Activated naive CD4-positive, alpha-beta T cell treated with anti-CD3 and anti-CD28 coated beads for 36 hours (primary cell): ENCODE measurements at regions of chr6 and their contacts with region 1.

Region 1: DNA sequence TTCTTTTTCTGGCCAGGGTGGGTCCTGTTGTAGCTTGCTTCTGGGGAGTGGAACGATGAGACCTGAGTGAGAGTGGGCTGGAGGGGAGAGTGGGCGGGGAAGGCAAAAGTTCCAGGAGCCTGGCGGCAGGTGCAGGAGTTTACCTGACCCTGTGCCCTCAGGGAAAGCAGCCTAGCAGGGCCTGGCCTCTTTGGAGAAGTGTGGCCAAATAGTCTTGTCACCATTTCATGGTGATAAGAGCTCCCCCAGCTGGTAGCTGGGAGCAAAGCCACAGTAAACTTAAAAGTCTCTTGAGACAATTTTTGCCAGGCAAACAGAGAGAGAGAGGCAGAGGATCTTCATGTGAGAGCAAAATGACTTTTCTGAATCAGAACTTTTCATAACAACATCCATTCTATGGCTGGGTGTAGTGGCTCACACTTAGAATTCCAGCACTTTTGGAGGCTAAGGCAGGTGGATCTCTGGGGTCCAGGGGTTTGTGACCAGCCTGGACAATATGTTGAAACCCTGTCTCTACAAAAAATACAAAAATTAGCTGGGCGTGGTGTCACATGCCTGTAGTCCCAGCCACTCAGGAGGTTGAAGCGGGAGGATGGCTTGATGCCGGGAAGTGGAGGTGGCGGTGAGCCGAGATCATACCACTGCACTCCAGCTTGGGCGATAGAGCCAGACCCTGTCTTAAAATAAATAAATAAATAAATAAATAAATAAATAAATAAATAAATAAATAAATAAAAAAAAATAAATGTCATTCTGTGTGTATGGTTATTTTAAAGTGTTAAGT is 161.8 kb upstream of the SCGN start:
- DNase-seq: peak; percentile 82
- H3K4me3 Mint-ChIP-seq: no peak overlapping the region
- H3K27ac Mint-ChIP-seq: no peak overlapping the region
- H3K4me1 Mint-ChIP-seq: peaks cover 6% of the 10 kb centered on the region
- H3K27me3 Mint-ChIP-seq: no peaks in the 10 kb centered on the region

Region 2: DNA sequence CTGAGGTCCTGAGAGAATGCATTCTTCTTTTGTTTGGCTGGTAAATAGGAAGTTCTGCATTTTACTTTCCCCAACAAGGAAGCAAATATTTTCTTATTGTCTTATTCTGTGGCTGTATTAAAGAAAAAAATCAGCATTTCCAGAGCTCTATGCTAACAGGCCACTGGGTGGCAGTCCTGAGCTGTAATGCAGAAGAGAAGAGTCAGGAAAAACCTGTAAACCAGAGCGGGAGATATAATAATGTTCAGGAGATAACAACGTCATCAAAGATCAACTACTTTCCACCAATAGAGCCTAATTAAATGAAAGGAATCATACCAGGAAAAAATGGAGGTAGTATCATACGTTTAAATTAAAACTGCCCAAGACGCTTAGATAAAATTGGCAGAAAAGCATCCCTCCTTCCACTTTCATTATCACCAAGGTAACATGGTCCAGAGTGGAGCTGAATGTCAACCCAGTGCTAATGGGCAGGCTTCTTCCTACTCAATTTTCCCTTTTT is 266.7 kb before region 1 on chr6:
- CTCF ChIA-PET with region 1: interaction called, 32 read pairs
- intact Hi-C with region 1: loop called (anchors 1 kb)
- DNase-seq: peak; percentile 80
- H3K4me3 Mint-ChIP-seq: peak overlapping the region; percentile 47
- H3K27ac Mint-ChIP-seq: no peak overlapping the region
- H3K4me1 Mint-ChIP-seq: peaks cover 8% of the 10 kb centered on the region
- H3K27me3 Mint-ChIP-seq: peaks cover 2% of the 10 kb centered on the region

Region 3: DNA sequence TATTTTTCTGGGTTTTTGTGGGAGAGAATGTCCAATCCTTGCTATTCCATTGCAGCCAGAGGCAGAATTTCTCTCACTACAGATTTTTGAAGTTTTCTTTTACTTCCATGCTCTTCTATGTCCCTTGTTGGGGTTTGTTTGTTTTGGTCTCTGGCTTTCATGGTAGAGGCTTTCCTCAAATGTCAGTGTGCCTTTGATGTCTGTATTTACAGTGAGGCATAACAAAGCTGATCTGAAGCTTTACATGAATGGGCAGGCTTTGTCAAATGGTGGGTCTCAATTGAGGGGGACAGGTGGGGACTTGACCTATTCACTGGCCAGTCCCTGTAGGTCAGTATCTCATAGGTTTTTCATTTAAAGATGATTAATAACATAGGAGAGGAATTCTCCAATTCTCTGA is 219.7 kb before region 1 on chr6:
- CTCF ChIA-PET with region 1: interaction called, 107 read pairs
- intact Hi-C with region 1: loop called (anchors 1 kb)
- DNase-seq: no peak
- H3K4me3 Mint-ChIP-seq: no peak overlapping the region
- H3K27ac Mint-ChIP-seq: no peak overlapping the region
- H3K4me1 Mint-ChIP-seq: peaks cover under 1% of the 10 kb centered on the region
- H3K27me3 Mint-ChIP-seq: no peaks in the 10 kb centered on the region

Region 4: DNA sequence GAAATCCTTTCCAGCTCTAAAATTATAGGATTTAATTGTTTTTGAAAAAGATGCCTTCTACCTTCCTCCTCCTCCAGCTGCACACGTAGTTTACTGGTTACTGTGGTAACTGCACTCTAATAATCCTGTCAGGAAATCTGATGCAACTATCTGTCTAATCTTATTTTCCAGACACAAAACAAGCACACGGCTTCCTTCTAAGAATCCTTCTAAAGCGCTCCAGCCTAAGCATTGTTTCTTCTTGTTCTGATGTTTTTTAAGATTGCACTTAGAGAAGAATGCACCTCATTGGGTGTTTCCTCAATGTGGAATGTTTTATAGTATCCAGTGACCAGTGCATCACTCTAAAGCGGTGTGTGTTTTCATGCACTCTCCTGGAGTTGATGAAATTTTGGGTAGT is 147.4 kb before region 1 on chr6:
- CTCF ChIA-PET with region 1: interaction called, 6 read pairs
- intact Hi-C with region 1: loop called (anchors 1 kb)
- DNase-seq: no peak
- H3K4me3 Mint-ChIP-seq: no peak overlapping the region
- H3K27ac Mint-ChIP-seq: no peak overlapping the region
- H3K4me1 Mint-ChIP-seq: peaks cover 12% of the 10 kb centered on the region
- H3K27me3 Mint-ChIP-seq: no peaks in the 10 kb centered on the region

Region 5: DNA sequence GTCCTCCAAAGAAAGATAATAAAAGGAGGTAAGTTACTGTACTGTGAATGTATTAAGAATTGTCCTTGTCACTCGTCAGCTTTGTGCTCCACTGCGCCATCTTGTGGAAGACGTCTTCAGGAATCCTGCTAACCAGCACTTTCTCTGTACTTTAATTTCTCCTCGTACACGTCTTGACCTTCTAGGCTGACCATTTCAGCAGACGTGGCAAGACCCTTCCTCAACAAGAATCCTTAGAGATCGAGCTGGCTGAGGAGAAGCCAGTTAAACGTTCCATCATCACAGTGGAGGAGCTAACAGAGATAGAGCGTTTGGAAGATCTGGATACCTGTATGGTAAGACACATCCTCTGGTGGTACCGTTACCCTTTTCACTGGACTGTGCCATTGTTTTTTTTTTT is 66.3 kb after region 1 on chr6:
- CTCF ChIA-PET with region 1: interaction called, 11 read pairs
- intact Hi-C with region 1: loop called (anchors 5 kb)
- DNase-seq: peak; percentile 92
- H3K4me3 Mint-ChIP-seq: no peak overlapping the region
- H3K27ac Mint-ChIP-seq: no peak overlapping the region
- H3K4me1 Mint-ChIP-seq: no peaks in the 10 kb centered on the region
- H3K27me3 Mint-ChIP-seq: no peaks in the 10 kb centered on the region

Region 6: GRCh38 chr6:25583099-25583498 is 92.9 kb after region 1 on chr6:
- CTCF ChIA-PET with region 1: no interaction called
- intact Hi-C with region 1: no loop called
- DNase-seq: peak; percentile 10
- H3K4me3 Mint-ChIP-seq: no peak overlapping the region
- H3K27ac Mint-ChIP-seq: no peak overlapping the region
- H3K4me1 Mint-ChIP-seq: peaks cover 10% of the 10 kb centered on the region
- H3K27me3 Mint-ChIP-seq: no peaks in the 10 kb centered on the region

Region 7: DNA sequence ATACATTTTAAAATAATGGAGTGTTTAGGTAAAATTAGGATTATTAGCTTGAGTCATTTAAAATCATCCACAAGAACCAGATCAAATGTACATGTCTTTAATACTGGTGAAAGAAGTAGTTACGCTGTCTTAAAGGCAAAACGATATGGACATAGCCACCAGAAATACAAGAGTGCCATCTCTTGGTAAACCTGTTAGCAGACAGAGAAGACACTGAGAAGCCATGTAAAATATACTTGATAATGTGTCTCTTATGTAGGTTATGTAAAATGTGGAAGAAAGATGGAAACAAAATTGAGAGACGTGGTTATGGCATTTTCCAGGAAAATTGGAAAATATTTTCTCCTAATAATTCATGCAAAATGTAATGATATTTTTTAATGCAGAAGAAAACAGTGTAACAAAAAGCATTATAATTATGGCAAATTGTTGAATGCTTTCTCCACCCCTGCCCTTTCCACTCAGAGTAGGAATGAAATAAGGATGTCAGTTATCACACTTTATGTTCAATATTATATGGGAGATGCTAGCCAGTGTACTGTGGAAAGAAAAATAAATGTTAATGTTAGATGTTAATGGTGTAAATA is 452.4 kb after region 1 on chr6:
- CTCF ChIA-PET with region 1: no interaction called
- intact Hi-C with region 1: loop called (anchors 10 kb)
- DNase-seq: peak; percentile 12
- H3K4me3 Mint-ChIP-seq: no peak overlapping the region
- H3K27ac Mint-ChIP-seq: no peak overlapping the region
- H3K4me1 Mint-ChIP-seq: peaks cover 18% of the 10 kb centered on the region
- H3K27me3 Mint-ChIP-seq: no peaks in the 10 kb centered on the region